Mammary epithelial cell (primary cell): ENCODE measurements at regions of chr2 and their contacts with region 1.

Region 1: GRCh38 chr2:70301344-70302194 is at the start of gene FAM136A:
- DNase-seq: peak; percentile 65
- H3K4me3 ChIP-seq: peak within 1 kb of the TSS; percentile 72 to 87 (median 83)
- H3K27ac ChIP-seq: peak within 1 kb of the TSS; percentile 58
- H3K4me1 ChIP-seq: peaks cover 9% of the 10 kb centered on the region
- H3K27me3 ChIP-seq: no peaks in the 10 kb centered on the region
- CTCF ChIP-seq: peak; percentile 64 to 86
- total RNA-seq, gene FAM136A: 14.5 to 37.8 TPM

Region 2: GRCh38 chr2:69724540-69725159 is 576.9 kb before region 1 on chr2:
- CTCF ChIA-PET with region 1: no interaction called
- dilution Hi-C with region 1: no loop called
- in situ Hi-C with region 1: no loop called
- intact Hi-C with region 1: loop called (anchors 10 kb)
- DNase-seq: peak; percentile 64
- H3K4me3 ChIP-seq: peak overlapping the region in 1 of 3 experiments; percentile 29
- H3K27ac ChIP-seq: no peak overlapping the region
- H3K4me1 ChIP-seq: no peaks in the 10 kb centered on the region
- H3K27me3 ChIP-seq: no peaks in the 10 kb centered on the region
- CTCF ChIP-seq: peak; percentile 86 to 87

Region 3: DNA sequence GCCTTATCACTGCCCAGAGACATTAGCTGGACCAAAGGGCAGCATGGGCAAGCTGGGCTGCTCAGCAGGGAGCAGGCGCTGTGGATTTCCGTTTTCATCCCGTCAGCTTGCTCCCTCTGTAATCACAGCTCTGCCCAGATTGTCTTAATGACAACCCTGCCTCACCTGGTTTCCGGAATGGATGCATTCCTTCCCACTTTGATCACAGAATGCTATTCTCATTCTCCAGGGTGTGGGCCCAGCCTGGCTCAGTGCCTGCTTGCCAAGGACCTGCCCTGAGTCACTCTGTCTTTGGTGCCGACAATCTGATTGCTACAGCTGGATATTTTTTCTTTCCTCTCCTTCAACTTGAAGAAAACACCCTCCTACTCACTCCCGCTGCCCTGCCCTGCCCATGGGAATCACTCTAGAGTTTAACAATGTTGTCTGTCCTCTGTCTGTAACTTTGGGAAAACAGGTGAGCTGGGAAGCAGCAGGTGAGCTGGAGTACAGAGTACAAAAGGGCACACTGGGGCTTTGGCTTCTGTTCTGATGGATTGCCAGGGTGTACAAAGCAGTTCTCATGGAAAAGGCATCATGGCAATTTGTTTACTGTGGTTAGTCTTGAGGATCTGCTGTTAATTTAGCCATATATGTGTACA is 27.5 kb after region 1 on chr2:
- CTCF ChIA-PET with region 1: interaction called, 3 read pairs
- dilution Hi-C with region 1: no loop called
- in situ Hi-C with region 1: no loop called
- intact Hi-C with region 1: loop called (anchors 2 kb)
- DNase-seq: peak; percentile 97
- H3K4me3 ChIP-seq: no peak overlapping the region
- H3K27ac ChIP-seq: peak overlapping the region; percentile 84
- H3K4me1 ChIP-seq: peaks cover 15% of the 10 kb centered on the region
- H3K27me3 ChIP-seq: no peaks in the 10 kb centered on the region
- CTCF ChIP-seq: no peak

Region 4: GRCh38 chr2:70553584-70554337 is 252.2 kb after region 1 on chr2 and contains the start of gene TGFA:
- CTCF ChIA-PET with region 1: no interaction called
- dilution Hi-C with region 1: no loop called
- in situ Hi-C with region 1: no loop called
- intact Hi-C with region 1: loop called (anchors 1 kb)
- DNase-seq: peak; percentile 96
- H3K4me3 ChIP-seq: peak within 1 kb of the TSS; percentile 55 to 98 (median 85)
- H3K27ac ChIP-seq: peak within 1 kb of the TSS; percentile 94
- H3K4me1 ChIP-seq: peaks cover 27% of the 10 kb centered on the region
- H3K27me3 ChIP-seq: no peaks in the 10 kb centered on the region
- CTCF ChIP-seq: peak; percentile 71 to 95
- total RNA-seq, gene TGFA: 59.2 to 126 TPM

Region 5: GRCh38 chr2:70789304-70790135 is 488.0 kb after region 1 on chr2:
- CTCF ChIA-PET with region 1: no interaction called
- dilution Hi-C with region 1: no loop called
- in situ Hi-C with region 1: loop called in 1 of 2 experiments (anchors 25 kb)
- intact Hi-C with region 1: loop called (anchors 5 kb)
- DNase-seq: peak; percentile 55
- H3K4me3 ChIP-seq: no peak overlapping the region
- H3K27ac ChIP-seq: no peak overlapping the region
- H3K4me1 ChIP-seq: peaks cover 11% of the 10 kb centered on the region
- H3K27me3 ChIP-seq: peaks cover 33% of the 10 kb centered on the region
- CTCF ChIP-seq: peak; percentile 39 to 72

Region 6: DNA sequence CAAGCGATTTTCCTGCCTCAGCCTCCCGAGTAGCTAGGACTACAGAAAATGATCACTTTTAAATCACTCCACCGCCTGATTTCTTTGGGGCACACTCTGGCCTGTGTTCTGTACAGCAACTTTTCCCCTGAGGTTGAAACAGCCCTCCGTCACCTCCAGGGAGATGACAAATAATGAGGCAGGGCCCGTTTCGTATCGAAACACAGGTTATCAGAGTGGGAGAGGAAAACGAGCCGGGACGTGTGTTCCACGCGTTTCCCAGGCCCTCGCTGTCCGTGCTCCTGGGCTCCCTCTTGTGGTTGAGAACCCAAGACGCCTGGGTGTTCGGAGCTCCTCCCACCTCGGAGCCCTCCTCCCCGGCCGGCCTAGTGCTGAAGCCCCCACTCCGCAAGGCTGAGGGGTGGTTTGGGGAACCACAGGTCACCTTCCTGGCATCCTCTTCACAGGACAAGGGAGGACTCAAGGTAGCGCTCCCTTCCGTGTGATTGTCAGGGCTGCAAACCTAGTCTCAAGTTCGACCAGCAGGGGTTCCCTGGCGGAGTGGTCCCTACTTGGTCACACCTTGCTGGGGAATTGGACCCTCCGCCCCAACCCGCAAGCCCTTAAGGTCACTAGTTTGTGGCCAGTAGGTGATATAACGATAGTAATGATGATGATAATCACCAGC is 646.9 kb after region 1 on chr2:
- CTCF ChIA-PET with region 1: no interaction called
- dilution Hi-C with region 1: loop called (anchors 25 kb)
- in situ Hi-C with region 1: loop called (anchors 25 kb)
- intact Hi-C with region 1: loop called (anchors 1 kb)
- DNase-seq: peak; percentile 50
- H3K4me3 ChIP-seq: peak overlapping the region in 2 of 3 experiments; percentile 20 to 22
- H3K27ac ChIP-seq: no peak overlapping the region
- H3K4me1 ChIP-seq: peaks cover 3% of the 10 kb centered on the region
- H3K27me3 ChIP-seq: peaks cover 2% of the 10 kb centered on the region
- CTCF ChIP-seq: peak; percentile 71 to 89